Right ventricle myocardium superior (tissue), 1 donor: ENCODE measurements at regions of chr1 and their contacts with region 1.

Region 1: GRCh38 chr1:167442124-167442848 is 76.0 kb downstream of the CD247 start:
- DNase-seq: peak; percentile 93
- ATAC-seq: peak; percentile 96

Region 2: DNA sequence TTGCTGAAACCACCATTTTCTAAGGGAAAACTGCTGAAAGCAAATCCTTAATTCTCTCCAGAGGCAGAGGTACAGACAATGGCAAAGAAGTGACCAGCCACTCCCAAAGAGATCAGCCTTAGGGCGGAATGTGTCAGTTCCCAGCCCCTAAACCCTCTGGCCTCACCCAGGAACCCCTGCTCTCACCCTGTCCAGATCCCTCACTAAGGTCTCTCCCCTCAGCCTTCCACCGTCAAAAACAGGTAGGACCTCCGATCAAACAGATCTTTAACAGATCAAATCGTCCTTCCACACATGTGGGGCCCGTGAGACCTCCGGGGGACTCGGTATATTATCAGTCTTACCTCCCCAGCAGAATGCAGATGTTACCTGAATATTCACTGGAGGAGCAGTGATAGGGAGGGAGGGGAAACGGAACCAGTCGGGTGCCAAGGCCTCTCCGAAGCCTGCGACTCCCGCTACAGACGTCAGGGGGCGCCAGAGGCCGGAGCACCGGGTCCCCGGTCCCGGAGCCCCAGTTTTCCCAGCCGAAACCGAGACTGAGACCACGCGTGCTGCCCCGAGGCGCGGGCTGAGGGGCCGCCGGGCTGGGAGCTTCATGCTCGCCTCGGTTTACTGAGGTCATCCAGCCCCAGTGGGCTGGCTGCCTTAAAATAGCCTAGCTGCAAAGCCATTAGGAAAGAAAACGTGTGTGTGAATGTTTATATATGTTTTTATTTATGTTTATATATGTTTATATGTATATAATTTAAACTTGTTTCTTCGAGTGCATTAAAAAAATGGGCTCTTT is 375.8 kb before region 1 on chr1:
- intact Hi-C with region 1: loop called (anchors 2 kb)
- DNase-seq: peak; percentile 86
- ATAC-seq: peak; percentile 96

Region 3: DNA sequence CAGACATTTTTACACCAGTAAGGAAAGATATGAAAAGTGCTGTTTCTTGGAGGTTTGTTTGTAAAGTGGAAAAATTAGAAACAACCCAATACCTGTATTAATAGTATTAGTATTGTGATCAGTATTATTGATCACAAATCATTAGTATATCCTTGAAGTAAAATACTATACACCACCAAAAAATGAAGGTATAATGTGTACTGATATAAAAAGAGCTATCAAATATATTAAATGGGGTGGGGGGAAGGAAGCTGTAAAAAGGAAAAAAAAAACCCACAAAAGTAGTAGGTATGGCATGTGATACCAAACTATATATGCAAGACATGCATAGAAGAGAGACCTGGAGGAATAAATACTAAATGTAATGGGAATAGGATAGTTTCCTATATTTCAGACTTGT is 175.3 kb before region 1 on chr1:
- intact Hi-C with region 1: loop called (anchors 2 kb)
- DNase-seq: no peak
- ATAC-seq: no peak

Region 4: GRCh38 chr1:167713330-167714081 is 271.2 kb after region 1 on chr1:
- intact Hi-C with region 1: no loop called
- DNase-seq: peak; percentile 59
- ATAC-seq: no peak